ENCODE measurements at regions of chr6 and their contacts with region 1.

Region 1: DNA sequence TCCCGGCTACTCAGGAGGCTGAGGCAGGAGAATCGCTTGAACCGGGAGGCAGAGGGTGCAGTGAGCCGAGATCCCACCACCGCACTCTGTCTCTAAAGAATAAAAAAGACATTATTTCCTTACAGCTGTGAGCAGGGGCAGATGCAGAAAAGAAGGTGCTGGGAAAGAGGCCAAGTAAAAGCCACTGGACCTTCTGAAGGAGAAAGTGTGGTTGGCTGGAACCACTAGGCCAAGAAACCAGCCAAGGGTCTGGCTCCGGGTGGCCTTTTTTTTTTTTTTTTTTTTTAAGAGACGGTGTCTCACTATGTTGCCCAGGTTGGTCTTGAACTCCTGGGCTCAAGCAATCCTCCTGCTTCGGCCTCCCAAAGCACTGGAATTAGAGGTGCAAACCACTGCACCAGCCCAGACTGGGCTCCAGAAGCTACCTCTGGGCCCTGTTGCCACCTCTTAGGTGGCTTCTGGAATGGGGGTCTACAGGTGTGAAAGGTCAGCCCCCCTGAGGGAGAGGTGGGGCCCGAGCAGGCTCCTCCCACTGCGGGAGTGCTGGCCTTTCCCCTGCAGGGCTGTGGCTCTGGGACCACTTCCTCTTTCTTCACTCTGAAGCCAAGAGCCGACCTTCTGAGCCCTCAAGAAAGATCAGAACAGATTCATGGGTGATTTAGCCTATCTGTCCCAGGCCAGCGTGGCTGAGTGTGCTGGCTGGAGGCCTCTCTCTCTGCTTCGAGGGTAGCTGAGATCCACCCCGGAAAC is at the start of gene FGD2:
- DNase-seq: peak; percentile 75
- ATAC-seq: peak; percentile 73
- H3K4me3 Mint-ChIP-seq: peak within 1 kb of the TSS; percentile 100
- H3K27ac Mint-ChIP-seq: peak within 1 kb of the TSS; percentile 92
- H3K4me1 Mint-ChIP-seq: peaks cover 84% of the 10 kb centered on the region
- H3K27me3 Mint-ChIP-seq: no peaks in the 10 kb centered on the region
- CTCF ChIP-seq: no peak
- total RNA-seq, gene FGD2: 362 and 435 TPM in 2 replicates

Region 2: DNA sequence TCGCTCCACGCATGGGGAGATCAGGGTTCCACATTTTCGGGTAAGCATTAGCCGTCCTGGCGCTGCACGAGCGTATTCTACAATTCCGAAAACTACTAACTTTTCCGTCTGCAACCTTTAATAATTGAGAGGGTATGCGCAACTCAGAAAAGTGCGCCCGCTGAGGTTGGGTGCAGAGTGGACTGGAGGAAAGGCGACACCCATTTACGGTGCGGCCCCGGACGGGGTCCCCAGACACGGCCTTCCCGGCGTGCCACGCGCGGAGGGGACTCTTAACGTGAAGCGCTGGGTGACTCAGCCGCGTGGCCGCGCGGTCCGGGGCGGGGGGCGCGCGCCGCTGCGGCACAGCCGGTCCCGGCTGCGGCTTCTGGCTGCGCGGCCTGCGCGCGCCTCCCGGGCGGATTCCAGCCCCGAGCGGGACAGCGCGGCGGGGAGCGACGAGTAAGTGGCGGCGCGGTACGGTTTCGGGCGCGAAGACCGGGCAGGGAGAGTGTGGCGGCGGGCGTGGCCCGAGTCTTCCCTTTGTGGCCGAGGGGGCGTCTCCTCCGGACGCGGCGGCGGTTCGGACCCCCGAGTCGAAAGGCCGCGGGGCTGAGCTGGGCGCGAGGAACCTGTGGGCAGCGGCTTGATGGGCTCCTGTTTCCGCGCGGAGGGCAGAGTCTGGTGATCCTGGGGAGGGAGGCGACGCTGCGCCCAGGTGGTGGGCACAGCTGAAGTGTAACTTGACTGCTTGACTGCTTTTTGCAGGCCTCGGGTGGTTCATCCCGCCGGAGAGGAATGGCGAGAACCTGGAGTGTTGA is 562.4 kb before region 1 on chr6 and contains the starts of genes KCTD20 and PXT1:
- CTCF ChIA-PET with region 1: no interaction called
- POLR2A ChIA-PET with region 1: no interaction called
- intact Hi-C with region 1: loop called (anchors 5 kb)
- DNase-seq: peak; percentile 85
- ATAC-seq: peak; percentile 84
- H3K4me3 Mint-ChIP-seq: peak within 1 kb of the TSS; percentile 98
- H3K27ac Mint-ChIP-seq: peak within 1 kb of the TSS; percentile 96
- H3K4me1 Mint-ChIP-seq: peaks cover 46% of the 10 kb centered on the region
- H3K27me3 Mint-ChIP-seq: no peaks in the 10 kb centered on the region
- CTCF ChIP-seq: no peak
- total RNA-seq, gene KCTD20: 45.5 and 48.1 TPM in 2 replicates
- total RNA-seq, gene PXT1: 0.11 and 0.22 TPM in 2 replicates

Region 3: DNA sequence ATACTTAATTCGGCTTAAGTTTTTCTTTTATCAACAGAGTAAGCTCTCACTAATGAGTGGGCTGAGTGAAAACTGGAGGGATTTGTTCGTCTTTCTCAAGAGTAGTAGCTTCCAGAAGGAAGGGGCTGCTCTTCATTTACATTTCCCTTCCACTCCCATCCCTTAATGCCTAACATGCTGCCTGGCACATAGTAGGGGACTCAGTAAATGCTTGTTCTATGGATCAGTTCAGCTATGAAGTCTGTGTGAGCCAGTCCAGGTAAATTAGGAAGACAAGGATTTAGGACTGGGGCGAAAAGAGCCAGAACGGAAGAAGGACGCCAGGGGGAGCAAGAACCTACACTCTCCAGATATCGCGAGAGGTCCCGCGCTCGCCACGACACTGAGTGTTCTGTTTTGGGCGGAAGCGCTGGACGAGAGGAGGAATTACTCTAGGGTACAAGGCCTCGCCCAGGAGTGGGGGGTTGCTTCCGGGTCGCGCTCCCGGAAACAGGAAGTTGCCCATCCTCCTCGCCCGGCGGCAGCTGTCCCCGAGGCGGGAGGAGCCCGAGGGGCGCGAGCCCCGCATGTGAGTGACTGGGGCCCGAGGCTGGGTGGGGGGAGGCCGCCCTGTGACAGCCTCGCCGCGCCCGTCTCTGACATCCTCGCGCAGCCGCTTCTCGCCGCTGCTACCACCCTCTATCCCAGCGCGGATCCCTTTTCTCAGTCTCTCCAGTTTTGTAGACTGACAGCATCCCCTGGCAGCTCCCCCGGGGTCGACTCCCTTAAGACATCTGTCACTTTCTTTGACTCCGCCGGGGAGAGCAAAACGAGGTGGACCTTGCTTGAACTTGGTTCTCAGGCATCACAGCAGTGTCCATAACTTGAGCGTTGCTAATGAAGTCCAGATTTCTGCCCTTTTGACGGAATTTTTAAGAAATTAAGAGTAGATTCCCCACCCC is 119.5 kb before region 1 on chr6 and contains the start of gene C6orf89:
- CTCF ChIA-PET with region 1: interaction called, 3 read pairs
- POLR2A ChIA-PET with region 1: interaction called, 13 read pairs
- intact Hi-C with region 1: loop called (anchors 1 kb)
- DNase-seq: peak; percentile 89
- ATAC-seq: peak; percentile 99
- H3K4me3 Mint-ChIP-seq: peak within 1 kb of the TSS; percentile 89
- H3K27ac Mint-ChIP-seq: peak within 1 kb of the TSS; percentile 94
- H3K4me1 Mint-ChIP-seq: peaks cover 30% of the 10 kb centered on the region
- H3K27me3 Mint-ChIP-seq: no peaks in the 10 kb centered on the region
- CTCF ChIP-seq: peak; percentile 34
- total RNA-seq, gene C6orf89: 29.7 and 30.3 TPM in 2 replicates

Region 4: DNA sequence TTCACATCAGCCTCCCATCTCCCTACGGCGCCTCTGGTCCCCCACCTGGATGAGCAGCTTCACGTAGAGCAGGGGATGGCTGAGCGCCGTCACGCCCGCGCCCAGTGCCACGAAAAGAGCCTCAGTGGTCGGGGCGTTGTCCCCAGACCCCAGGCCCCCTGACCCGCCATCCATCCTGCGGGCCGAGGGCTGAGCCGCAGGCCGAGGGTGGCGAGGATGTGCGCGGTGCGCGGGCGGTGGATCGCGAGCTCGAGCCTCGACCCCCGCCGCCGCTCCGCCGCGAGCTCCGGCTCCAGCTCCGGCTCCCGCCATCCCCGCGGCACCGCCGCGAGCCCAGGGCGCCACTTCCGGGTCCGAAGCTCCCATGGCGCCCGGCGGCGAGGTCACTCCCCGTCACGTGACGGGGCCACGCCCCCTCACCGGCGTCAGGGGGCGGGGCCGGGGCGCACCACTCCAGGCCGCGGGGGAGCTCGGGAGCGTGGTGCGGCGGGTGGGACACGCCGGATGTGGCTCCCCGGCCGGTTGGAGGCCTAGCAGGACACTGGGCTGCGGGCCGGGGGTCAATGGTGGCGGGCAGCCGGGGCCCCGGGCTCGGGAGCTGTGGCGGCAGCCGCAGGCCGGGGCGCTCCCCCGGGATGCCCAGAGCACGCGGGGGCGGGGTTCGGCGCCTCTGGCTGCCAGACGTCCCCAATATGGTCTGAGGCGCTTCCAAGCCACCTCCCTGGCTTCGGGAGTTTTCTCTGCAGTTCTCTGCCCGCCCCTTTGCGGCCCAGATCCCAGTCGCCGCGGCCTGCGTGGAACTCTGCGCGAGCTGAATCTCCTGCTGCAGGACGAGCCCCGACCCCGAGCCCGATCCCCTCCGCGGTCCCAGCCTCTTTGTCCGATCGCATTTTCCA is 19.2 kb before region 1 on chr6 and contains the start of gene MTCH1:
- CTCF ChIA-PET with region 1: interaction called, 38 read pairs
- POLR2A ChIA-PET with region 1: interaction called, 209 read pairs
- intact Hi-C with region 1: loop called (anchors 1 kb)
- DNase-seq: peak; percentile 96
- ATAC-seq: peak; percentile 87
- H3K4me3 Mint-ChIP-seq: peak within 1 kb of the TSS; percentile 96
- H3K27ac Mint-ChIP-seq: peak within 1 kb of the TSS; percentile 91
- H3K4me1 Mint-ChIP-seq: peaks cover 20% of the 10 kb centered on the region
- H3K27me3 Mint-ChIP-seq: no peaks in the 10 kb centered on the region
- CTCF ChIP-seq: no peak
- total RNA-seq, gene MTCH1: 128 and 133 TPM in 2 replicates

Region 5: DNA sequence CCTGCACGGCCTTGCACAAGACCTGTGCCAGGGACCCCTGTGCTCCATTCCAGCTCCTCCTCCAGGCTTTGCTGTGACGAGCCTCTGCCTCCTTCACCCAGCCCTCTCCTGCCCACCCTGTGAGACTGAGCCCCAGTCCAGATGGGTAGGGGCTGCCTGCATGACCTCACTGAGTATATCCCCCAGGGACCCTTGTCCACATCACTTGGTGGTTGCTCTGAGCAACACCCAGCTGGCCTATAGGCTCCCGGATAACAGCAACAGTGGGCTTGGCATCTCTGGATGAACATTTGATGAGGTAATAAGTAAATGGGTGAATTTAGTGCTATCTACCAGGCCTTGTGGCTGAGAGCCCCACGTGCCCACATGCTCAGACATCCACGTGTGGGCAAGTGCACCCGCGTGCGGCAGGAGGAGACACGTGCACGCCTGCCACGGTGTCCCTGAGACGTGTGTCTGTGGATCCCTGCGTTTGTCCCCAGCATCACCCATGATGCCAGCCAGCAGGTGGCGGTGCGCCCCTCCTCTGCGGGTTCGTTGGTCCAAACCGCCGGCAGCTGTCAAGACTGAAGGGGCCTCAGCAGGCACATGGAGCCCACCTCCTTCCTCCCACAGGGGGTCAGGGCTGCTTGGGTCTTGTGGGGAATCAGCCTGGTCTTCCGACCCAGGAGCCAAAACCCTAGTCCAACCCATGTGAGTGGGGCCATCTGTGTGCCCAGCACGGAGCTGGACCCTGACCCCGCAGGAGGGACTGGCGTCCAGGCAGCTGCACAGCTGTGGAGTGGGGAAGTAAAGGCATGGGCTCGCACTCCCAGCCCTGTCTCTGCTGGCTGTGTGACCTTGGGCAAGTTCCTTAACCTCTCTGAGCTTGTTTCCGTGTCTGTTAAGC is 46.1 kb after region 1 on chr6:
- CTCF ChIA-PET with region 1: interaction called, 3 read pairs
- POLR2A ChIA-PET with region 1: interaction called, 66 read pairs
- intact Hi-C with region 1: loop called (anchors 1 kb)
- DNase-seq: peak; percentile 89
- ATAC-seq: peak; percentile 44
- H3K4me3 Mint-ChIP-seq: peak overlapping the region; percentile 64
- H3K27ac Mint-ChIP-seq: peak overlapping the region; percentile 98
- H3K4me1 Mint-ChIP-seq: peaks cover 58% of the 10 kb centered on the region
- H3K27me3 Mint-ChIP-seq: peaks cover 1% of the 10 kb centered on the region
- CTCF ChIP-seq: no peak

Region 6: DNA sequence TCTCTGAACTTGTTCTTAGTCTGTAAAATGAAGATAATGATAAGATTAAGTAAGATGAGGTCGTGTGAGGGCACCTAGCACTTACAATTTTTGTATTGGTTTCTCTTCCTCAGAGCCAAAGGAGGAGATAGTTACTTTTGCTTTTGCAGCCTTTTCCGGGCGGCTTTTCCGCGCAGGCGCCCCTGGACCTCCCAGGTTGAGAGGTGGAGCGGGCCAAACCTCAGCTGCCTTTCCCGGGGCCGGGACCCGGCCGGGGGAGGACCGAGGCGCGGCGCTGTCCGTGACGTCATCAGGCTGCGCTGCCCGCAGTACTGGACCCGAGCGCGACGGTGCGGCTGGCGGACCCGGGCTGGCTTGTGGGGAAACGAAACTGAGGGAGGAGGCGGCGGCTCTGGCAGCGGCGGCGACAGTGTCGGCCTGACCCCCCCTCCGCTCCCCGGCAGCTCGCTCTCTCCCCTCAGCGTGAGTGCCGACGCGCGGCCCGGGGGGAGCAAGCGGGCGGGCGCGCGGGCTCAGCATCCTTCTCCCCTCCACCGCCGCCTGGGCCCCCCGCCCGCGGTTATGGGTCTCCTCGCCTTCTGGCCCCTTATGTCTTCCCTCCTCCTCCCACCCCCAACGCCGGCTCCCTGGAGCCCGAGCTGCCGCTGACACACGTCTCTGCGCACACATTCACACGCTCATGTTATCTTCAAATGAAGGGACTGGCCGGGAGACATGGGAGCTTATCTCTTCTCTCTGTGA is 427.9 kb after region 1 on chr6 and contains the start of gene CMTR1:
- CTCF ChIA-PET with region 1: no interaction called
- POLR2A ChIA-PET with region 1: no interaction called
- intact Hi-C with region 1: loop called (anchors 5 kb)
- DNase-seq: peak; percentile 99
- ATAC-seq: peak; percentile 89
- H3K4me3 Mint-ChIP-seq: peak within 1 kb of the TSS; percentile 95
- H3K27ac Mint-ChIP-seq: peak within 1 kb of the TSS; percentile 97
- H3K4me1 Mint-ChIP-seq: peaks cover 34% of the 10 kb centered on the region
- H3K27me3 Mint-ChIP-seq: peaks cover 2% of the 10 kb centered on the region
- CTCF ChIP-seq: no peak
- total RNA-seq, gene CMTR1: 59.0 and 65.7 TPM in 2 replicates

Measured in activated B cell treated with CpG ODN at 0.5 μM for 24 hours (primary cell).